A673 (cell line): ENCODE measurements at regions of chr5 and their contacts with region 1.

Region 1: DNA sequence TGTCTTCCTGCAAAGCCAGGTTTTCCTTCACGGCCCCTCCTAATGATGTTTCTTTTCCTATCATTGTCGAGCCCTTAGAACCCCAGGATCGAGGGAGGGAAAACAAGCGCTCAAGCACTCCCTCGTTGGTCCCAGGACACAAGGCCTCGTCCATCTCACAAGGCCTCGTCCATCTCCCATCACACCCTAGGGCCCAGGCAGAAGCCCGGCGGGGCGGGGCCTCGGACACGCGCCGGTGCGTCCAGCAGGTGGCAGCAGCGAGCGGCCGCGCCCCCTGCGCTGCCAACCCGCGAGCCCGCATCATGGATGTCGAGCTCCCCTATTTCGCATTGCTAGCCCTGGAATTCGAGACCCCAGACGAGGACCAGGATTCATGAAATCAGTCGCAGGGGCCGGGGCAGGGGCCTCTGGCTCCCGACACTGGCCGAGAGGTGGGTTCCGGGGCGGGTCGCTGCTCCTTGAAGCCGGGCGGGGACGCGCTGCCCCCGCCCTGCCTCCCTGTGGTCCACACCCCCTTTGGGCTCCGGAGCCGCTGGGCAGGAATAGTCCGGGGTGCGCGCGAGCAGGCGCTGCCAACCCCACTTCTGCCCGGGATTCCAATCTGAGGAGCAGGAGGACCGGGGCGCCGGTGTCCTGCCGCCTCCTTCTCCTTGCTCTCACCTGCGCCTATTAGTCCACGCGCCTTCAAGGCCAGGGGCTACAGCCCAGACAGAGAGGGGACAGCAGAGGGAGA is at the start of gene ABLIM3:
- DNase-seq: peak; percentile 62
- H3K4me3 ChIP-seq: peak within 1 kb of the TSS; percentile 43
- H3K27ac ChIP-seq: no peak within 1 kb of the TSS
- H3K4me1 ChIP-seq: no peaks in the 10 kb centered on the region
- H3K27me3 ChIP-seq: peaks cover 46% of the 10 kb centered on the region
- CTCF ChIP-seq: peak; percentile 80
- total RNA-seq, gene ABLIM3: not detected in 2 replicates

Region 2: GRCh38 chr5:149228618-149229297 is 87.4 kb after region 1 on chr5:
- CTCF ChIA-PET with region 1: interaction called, 3 read pairs
- POLR2A ChIA-PET with region 1: no interaction called
- intact Hi-C with region 1: loop called (anchors 2 kb)
- DNase-seq: peak; percentile 79
- H3K4me3 ChIP-seq: no peak overlapping the region
- H3K27ac ChIP-seq: no peak overlapping the region
- H3K4me1 ChIP-seq: no peaks in the 10 kb centered on the region
- H3K27me3 ChIP-seq: peaks cover 34% of the 10 kb centered on the region
- CTCF ChIP-seq: peak; percentile 50

Region 3: GRCh38 chr5:149268928-149269557 is 127.7 kb after region 1 on chr5:
- CTCF ChIA-PET with region 1: no interaction called
- POLR2A ChIA-PET with region 1: no interaction called
- intact Hi-C with region 1: loop called (anchors 2 kb)
- DNase-seq: peak; percentile 68
- H3K4me3 ChIP-seq: no peak overlapping the region
- H3K27ac ChIP-seq: no peak overlapping the region
- H3K4me1 ChIP-seq: no peaks in the 10 kb centered on the region
- H3K27me3 ChIP-seq: peaks cover 39% of the 10 kb centered on the region
- CTCF ChIP-seq: peak; percentile 69